ENCODE measurements at regions of chr10 and their contacts with region 1.

Region 1: GRCh38 chr10:14782691-14783363 is 8.1 kb upstream of the FAM107B start:
- DNase-seq: peak; percentile 92 to 98
- ATAC-seq: peak; percentile 98 to 100
- H3K4me3 ChIP-seq: no peak overlapping the region
- H3K27ac ChIP-seq: peak overlapping the region; percentile 88 to 92
- H3K4me1 ChIP-seq: peaks cover 51% of the 10 kb centered on the region
- CTCF ChIP-seq: no peak
- EP300 ChIP-seq: peak; percentile 63 to 66; a peak in 2 of 5 replicates
- POLR2A ChIP-seq: peak; percentile 15; the same call in 1 of the 2 replicates
- RAD21 ChIP-seq: peak in 1 of 2 experiments; percentile 55; a peak in 4 of 5 replicates

Region 2: DNA sequence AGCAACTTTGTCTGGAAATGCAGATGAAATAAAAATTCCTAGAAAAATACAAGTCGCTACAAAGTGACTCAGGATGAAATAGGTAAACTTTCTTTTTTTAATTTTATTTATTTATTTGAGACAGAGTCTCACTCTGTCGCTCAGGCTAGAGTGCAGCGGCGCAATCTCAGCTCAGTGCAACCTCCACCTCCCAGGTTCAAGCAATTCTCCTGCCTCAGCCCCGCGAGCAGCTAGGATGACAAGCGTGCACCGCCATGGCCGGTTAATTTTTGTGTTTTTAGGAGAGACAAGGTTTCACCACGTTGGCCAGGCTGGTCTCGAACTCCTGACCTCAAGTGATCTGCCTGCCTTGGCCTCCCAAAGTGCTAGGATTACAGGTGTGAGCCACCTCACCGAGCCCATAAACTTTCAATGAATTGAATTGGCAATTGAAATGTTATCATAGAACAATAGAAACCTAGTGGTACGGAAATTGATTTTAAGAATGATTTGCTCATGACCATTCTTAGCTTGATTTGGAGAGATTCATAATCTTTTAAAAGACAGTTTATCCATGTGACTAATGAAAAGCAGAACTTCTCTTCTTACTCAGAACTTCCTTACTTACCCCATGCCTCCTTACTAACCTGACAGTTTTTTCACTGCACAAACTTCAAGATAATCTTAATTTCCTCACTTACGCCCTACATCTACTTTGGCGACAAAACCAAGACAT is 169.8 kb before region 1 on chr10:
- CTCF ChIA-PET with region 1: no interaction called
- POLR2A ChIA-PET with region 1: interaction called, 13 read pairs
- DNase-seq: no peak
- ATAC-seq: no peak
- H3K4me3 ChIP-seq: no peak overlapping the region
- H3K27ac ChIP-seq: peak overlapping the region; percentile 81 to 86
- H3K4me1 ChIP-seq: peaks cover 48% of the 10 kb centered on the region
- CTCF ChIP-seq: no peak
- EP300 ChIP-seq: no peak
- POLR2A ChIP-seq: no peak
- RAD21 ChIP-seq: no peak

Region 3: GRCh38 chr10:15059914-15060313 is 277.1 kb after region 1 on chr10:
- CTCF ChIA-PET with region 1: no interaction called
- POLR2A ChIA-PET with region 1: no interaction called
- DNase-seq: no peak
- ATAC-seq: no peak
- H3K4me3 ChIP-seq: no peak overlapping the region
- H3K27ac ChIP-seq: no peak overlapping the region
- H3K4me1 ChIP-seq: no peaks in the 10 kb centered on the region
- CTCF ChIP-seq: no peak
- EP300 ChIP-seq: no peak
- POLR2A ChIP-seq: no peak
- RAD21 ChIP-seq: no peak